MCF 10A (cell line): ENCODE measurements at regions of chr22 and their contacts with region 1.

Region 1: GRCh38 chr22:44080936-44081861 is 57.1 kb downstream of the PARVB start:
- DNase-seq: peak; percentile 68
- H3K4me3 Mint-ChIP-seq: no peak overlapping the region
- H3K27ac Mint-ChIP-seq: no peak overlapping the region
- H3K4me1 Mint-ChIP-seq: peaks cover 8% of the 10 kb centered on the region
- H3K27me3 Mint-ChIP-seq: no peaks in the 10 kb centered on the region
- CTCF ChIP-seq: peak; percentile 77

Region 2: GRCh38 chr22:44003405-44004103 is 77.6 kb before region 1 on chr22:
- CTCF ChIA-PET with region 1: interaction called, 11 read pairs
- POLR2A ChIA-PET with region 1: no interaction called
- intact Hi-C with region 1: no loop called
- DNase-seq: no peak
- H3K4me3 Mint-ChIP-seq: no peak overlapping the region
- H3K27ac Mint-ChIP-seq: no peak overlapping the region
- H3K4me1 Mint-ChIP-seq: no peaks in the 10 kb centered on the region
- H3K27me3 Mint-ChIP-seq: no peaks in the 10 kb centered on the region
- CTCF ChIP-seq: no peak

Region 3: GRCh38 chr22:44037519-44038370 is 43.5 kb before region 1 on chr22:
- CTCF ChIA-PET with region 1: interaction called, 6 read pairs
- POLR2A ChIA-PET with region 1: interaction called, 4 read pairs
- intact Hi-C with region 1: loop called (anchors 10 kb)
- DNase-seq: peak; percentile 91
- H3K4me3 Mint-ChIP-seq: peak overlapping the region; percentile 48
- H3K27ac Mint-ChIP-seq: peak overlapping the region; percentile 59
- H3K4me1 Mint-ChIP-seq: peaks cover 15% of the 10 kb centered on the region
- H3K27me3 Mint-ChIP-seq: no peaks in the 10 kb centered on the region
- CTCF ChIP-seq: no peak

Region 4: DNA sequence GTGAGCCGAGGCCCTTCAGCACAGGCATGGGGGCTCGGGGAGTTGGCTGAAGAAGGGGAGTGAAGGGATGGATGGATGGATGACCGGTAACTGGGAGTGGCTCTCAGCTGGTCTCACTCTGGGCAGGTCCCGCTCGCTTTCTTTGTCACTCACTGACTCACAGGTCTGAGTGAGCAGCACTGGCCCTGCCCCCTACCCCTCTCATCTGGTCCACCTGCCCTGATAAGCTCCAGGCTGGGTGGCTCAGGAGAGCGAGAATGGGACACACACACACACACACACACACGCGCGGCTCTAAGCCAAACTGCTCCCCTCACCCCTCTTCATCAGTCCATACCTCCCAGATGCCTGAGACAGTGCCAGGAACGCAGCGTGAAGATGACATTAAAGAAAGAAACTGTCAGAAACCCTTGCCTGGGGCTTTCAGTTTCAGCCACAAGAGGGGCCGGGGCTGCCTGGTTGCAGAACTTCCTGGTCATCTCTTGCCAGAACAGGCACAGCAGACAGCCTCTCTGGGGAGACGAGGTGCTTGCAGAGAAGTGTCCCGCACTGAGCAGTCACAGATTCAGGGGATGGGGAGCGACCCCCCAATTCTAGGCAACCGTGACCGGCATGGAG is 248.1 kb after region 1 on chr22:
- CTCF ChIA-PET with region 1: interaction called, 4 read pairs
- POLR2A ChIA-PET with region 1: no interaction called
- intact Hi-C with region 1: loop called (anchors 5 kb)
- DNase-seq: no peak
- H3K4me3 Mint-ChIP-seq: no peak overlapping the region
- H3K27ac Mint-ChIP-seq: no peak overlapping the region
- H3K4me1 Mint-ChIP-seq: peaks cover 22% of the 10 kb centered on the region
- H3K27me3 Mint-ChIP-seq: peaks cover 13% of the 10 kb centered on the region
- CTCF ChIP-seq: no peak